Pancreas (tissue), 10 donors: ENCODE measurements at regions of chr17 and their contacts with region 1.

Region 1: DNA sequence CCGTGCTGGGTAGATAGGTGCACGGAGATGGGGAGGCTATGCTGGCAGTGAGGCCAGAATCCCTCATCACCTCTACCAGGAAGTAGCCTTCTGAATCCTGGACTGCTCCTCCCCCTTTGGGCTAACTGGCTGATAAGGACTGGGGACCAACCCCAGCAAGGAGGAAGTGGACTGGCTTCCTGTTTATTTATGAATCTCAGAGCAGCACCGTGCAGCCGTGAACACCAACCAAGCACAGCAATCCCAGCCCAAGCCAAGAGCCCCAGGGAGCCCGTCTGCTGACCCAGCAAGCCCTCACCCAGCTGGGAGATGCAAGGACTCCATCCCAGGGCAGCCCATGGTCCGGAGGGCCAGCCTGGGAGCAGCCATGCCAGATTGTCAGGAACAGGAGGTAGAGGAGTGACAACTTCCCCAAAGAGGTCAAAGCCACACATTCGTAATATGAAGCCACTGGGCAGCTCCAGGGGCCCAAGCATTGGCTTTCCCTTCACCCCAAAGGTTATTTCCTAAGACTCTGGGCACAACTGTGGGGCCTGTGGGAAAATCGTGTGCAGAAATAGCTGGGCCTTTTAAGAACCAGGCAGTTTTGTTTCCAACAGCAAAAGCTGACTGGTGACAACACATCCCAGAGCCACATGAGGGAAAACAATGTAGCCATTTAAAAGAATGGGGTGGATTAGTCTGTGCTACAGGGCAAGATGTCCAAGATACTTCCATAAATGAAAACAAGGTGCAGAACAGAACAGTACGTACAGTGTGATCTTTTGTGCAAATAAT is 23.9 kb downstream of the PHB1 start:
- DNase-seq: no peak
- ATAC-seq: peak in 3 of 4 donors; percentile 55 to 71 (median 65)
- H3K4me3 ChIP-seq: peak overlapping the region in 1 of 4 donors; percentile 6
- H3K27ac ChIP-seq: peak overlapping the region in 1 of 4 donors; percentile 54
- H3K4me1 ChIP-seq: no peaks in the 10 kb centered on the region
- H3K27me3 ChIP-seq: no peaks in the 10 kb centered on the region
- CTCF ChIP-seq: no peak

Region 2: DNA sequence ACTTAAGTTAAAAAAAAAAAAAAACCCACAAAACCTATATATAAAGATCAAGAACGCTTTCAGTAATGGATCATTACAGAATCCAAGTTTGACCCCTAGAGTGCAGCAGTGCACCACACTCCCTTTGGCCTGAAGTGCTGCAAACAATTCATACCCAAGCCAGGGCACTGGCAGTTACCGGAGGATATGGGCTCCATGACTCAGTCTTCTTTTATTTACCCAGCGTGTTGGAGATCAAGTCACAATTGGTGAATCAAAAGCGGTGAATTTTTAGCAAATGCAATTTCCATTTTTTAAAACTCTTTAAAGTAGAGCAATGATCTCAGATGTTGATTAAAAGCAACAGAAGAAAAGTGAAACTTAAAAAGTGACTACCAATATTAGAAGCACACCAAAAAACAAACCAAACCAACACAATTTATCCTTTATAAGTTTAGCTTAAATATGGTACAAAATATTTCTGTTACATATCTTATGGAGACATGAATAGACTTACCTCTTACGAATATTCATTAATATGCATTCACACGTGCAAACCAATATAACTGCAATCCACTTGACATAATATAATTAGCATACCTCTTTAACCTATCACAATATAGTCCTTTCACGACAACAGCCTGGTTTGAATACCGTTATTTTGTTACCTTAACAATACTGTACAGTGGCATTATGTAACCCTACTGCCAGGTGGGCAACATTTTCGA is 75.0 kb before region 1 on chr17:
- intact Hi-C with region 1: loop called (anchors 5 to 10 kb)
- DNase-seq: peak; percentile 58 to 84 (median 63)
- ATAC-seq: peak; percentile 100
- H3K4me3 ChIP-seq: no peak overlapping the region
- H3K27ac ChIP-seq: no peak overlapping the region
- H3K4me1 ChIP-seq: peaks cover 4 to 5% (median 4%) of the 10 kb centered on the region in 3 donors
- H3K27me3 ChIP-seq: no peaks in the 10 kb centered on the region
- CTCF ChIP-seq: peak; percentile 38 to 78 (median 69)

Region 3: GRCh38 chr17:49327835-49328784 is 62.6 kb before region 1 on chr17:
- intact Hi-C with region 1: loop called in 1 of 3 experiments (anchors 10 kb)
- DNase-seq: no peak
- ATAC-seq: peak in 1 of 4 donors; percentile 40
- H3K4me3 ChIP-seq: no peak overlapping the region
- H3K27ac ChIP-seq: no peak overlapping the region
- H3K4me1 ChIP-seq: no peaks in the 10 kb centered on the region
- H3K27me3 ChIP-seq: no peaks in the 10 kb centered on the region
- CTCF ChIP-seq: no peak

Region 4: DNA sequence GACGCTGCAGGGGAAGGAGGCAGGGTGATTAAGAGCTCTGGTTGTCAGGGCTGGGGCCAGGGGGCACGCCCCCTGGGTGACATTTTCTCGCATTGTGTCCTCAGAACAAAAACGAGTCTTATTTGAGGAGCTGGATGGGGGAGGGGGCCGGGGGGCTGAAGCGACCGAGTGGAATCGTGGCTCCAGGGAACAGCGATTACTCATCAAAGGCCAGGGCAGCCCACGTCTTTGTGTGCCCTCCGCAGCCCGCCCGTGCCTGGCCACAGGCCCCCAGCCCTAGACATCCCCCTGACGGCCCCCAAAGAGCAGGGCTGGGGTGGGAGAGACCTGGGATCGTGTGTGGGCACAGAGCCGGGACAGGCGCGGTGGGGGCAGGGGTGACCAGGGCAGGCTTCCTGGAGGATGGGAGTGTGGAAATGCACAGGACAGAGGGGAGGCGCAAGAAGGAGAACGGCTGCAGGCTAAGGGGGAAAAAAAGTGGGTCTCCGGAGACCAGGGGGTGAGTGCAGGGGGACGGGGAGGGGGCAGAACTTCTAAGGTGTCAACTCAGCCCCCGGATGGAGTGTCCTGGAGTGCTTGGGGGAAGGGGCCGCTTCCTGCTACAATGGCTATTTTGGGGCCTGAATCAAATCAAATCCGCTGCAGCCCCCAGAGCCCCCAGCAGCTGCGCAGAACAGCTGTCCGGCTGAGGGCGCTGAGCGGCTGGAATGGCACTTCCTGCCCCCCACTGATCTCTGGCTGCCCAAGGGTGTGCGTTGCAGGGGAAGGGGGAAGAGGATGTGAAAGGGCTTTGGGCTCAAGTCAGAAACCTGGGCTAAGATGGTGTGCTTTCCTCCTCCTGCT is 47.9 kb after region 1 on chr17:
- intact Hi-C with region 1: no loop called
- DNase-seq: peak in 1 of 6 donors; percentile 39
- ATAC-seq: no peak
- H3K4me3 ChIP-seq: no peak overlapping the region
- H3K27ac ChIP-seq: no peak overlapping the region
- H3K4me1 ChIP-seq: no peaks in the 10 kb centered on the region
- H3K27me3 ChIP-seq: peaks cover 0 to 4% (median 0%) of the 10 kb centered on the region in 4 donors
- CTCF ChIP-seq: no peak

Region 5: DNA sequence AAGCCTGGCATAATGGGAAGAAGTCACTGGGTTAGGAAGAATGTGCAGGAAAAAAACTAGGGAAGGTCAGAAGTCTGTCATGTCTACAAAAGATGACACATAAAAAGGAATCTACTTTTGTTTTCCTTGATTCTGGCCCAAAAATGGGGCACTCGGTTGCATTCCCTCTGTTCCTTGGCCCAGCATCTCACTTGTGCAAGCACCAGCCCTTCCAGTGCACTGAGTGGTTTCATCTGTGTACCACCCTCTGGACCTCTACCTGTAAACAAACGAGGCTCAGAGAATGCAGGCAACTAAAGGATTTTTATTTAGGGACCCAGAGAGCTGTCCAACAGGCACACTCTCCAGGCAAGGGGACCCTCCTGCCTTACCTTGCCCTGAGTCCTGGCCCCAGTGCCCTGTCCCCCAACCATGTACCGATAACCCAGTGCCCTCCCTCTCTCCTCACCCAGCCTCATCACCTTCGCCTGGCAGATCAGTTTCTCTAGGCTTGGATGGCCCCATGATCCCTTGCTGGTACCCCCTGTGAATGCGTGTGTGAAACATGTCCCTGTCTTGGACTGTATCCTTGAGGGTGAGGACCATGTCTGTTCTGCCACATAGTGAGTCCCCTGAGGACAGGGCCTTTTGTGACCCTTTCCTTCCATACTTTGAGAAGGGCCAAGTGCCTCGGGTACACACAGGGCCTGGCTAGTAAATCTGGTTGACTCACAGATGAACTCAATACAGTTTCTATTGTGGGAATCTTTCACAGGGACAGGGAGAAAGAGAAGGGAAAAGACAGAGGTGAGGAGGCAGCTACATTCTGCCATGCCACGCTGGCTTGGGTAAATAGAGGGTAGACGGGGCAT is 198.2 kb after region 1 on chr17:
- intact Hi-C with region 1: no loop called
- DNase-seq: no peak
- ATAC-seq: peak in 1 of 4 donors; percentile 15
- H3K4me3 ChIP-seq: no peak overlapping the region
- H3K27ac ChIP-seq: no peak overlapping the region
- H3K4me1 ChIP-seq: no peaks in the 10 kb centered on the region
- H3K27me3 ChIP-seq: no peaks in the 10 kb centered on the region
- CTCF ChIP-seq: no peak

Region 6: GRCh38 chr17:49739641-49740271 is 349.0 kb after region 1 on chr17:
- intact Hi-C with region 1: no loop called
- DNase-seq: peak; percentile 57 to 91 (median 76)
- ATAC-seq: peak; percentile 69 to 85 (median 76)
- H3K4me3 ChIP-seq: no peak overlapping the region
- H3K27ac ChIP-seq: peak overlapping the region in 2 of 4 donors; percentile 18 to 48
- H3K4me1 ChIP-seq: peaks cover 0 to 33% (median 13%) of the 10 kb centered on the region in 3 donors
- H3K27me3 ChIP-seq: no peaks in the 10 kb centered on the region
- CTCF ChIP-seq: no peak